CD8-positive, alpha-beta memory T cell (primary cell): ENCODE measurements at regions of chr19 and their contacts with region 1.

Region 1: GRCh38 chr19:54390942-54391577 is 24.2 kb upstream of the TTYH1 start:
- DNase-seq: peak; percentile 58 to 79 (median 68)
- H3K4me3 ChIP-seq: no peak overlapping the region
- H3K4me3 Mint-ChIP-seq: peak overlapping the region in 4 of 7 donors; percentile 39 to 69 (median 66)
- H3K27ac ChIP-seq: no peak overlapping the region
- H3K27ac Mint-ChIP-seq: peak overlapping the region in 6 of 8 donors; percentile 41 to 97 (median 81)
- H3K4me1 ChIP-seq: peaks cover 34% of the 10 kb centered on the region
- H3K4me1 Mint-ChIP-seq: peaks cover 32 to 40% (median 37%) of the 10 kb centered on the region in 3 donors
- H3K27me3 ChIP-seq: no peaks in the 10 kb centered on the region
- H3K27me3 Mint-ChIP-seq: peaks cover 7 to 19% of the 10 kb centered on the region in 2 donors

Region 2: GRCh38 chr19:54287456-54287855 is 103.6 kb before region 1 on chr19:
- CTCF ChIA-PET with region 1: no interaction called
- POLR2A ChIA-PET with region 1: no interaction called
- DNase-seq: no peak
- H3K4me3 ChIP-seq: no peak overlapping the region
- H3K4me3 Mint-ChIP-seq: no peak overlapping the region
- H3K27ac ChIP-seq: no peak overlapping the region
- H3K27ac Mint-ChIP-seq: no peak overlapping the region
- H3K4me1 ChIP-seq: no peaks in the 10 kb centered on the region
- H3K4me1 Mint-ChIP-seq: peaks cover 0 to 17% (median 10%) of the 10 kb centered on the region in 3 donors
- H3K27me3 ChIP-seq: no peaks in the 10 kb centered on the region
- H3K27me3 Mint-ChIP-seq: peaks cover 5 to 49% of the 10 kb centered on the region in 2 donors

Region 3: DNA sequence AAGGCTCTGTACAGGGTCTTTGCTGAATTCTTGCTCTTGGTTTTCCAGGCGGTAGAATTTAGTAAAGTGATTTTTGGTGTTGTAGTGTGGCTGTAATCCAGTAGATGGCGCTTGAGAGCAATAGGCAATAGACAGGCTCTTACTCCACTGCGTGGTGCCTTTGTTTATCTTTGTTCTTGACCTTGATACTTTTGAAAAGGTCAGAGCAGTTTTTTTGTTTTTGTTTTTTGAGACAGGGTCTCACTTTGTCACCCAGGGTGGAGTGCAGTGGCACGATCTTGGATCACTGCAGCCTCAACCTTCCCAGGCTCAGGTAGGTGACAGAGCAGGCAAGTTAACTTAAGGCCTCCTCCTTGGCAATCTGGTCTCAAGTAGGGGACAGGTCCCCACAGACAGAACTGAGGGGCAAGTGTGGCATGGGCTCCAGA is 65.9 kb before region 1 on chr19:
- CTCF ChIA-PET with region 1: interaction called, 119 read pairs
- POLR2A ChIA-PET with region 1: interaction called, 5 read pairs
- DNase-seq: peak; percentile 44 to 60 (median 50)
- H3K4me3 ChIP-seq: no peak overlapping the region
- H3K4me3 Mint-ChIP-seq: no peak overlapping the region
- H3K27ac ChIP-seq: no peak overlapping the region
- H3K27ac Mint-ChIP-seq: no peak overlapping the region
- H3K4me1 ChIP-seq: peaks cover 8% of the 10 kb centered on the region
- H3K4me1 Mint-ChIP-seq: peaks cover 8 to 15% (median 10%) of the 10 kb centered on the region in 3 donors
- H3K27me3 ChIP-seq: no peaks in the 10 kb centered on the region
- H3K27me3 Mint-ChIP-seq: peaks cover 9 to 23% of the 10 kb centered on the region in 2 donors

Region 4: GRCh38 chr19:54352546-54352945 is 38.5 kb before region 1 on chr19:
- CTCF ChIA-PET with region 1: interaction called, 44 read pairs
- POLR2A ChIA-PET with region 1: interaction called, 3 read pairs
- DNase-seq: no peak
- H3K4me3 ChIP-seq: no peak overlapping the region
- H3K4me3 Mint-ChIP-seq: no peak overlapping the region
- H3K27ac ChIP-seq: no peak overlapping the region
- H3K27ac Mint-ChIP-seq: peak overlapping the region in 5 of 8 donors; percentile 2 to 62 (median 34)
- H3K4me1 ChIP-seq: no peaks in the 10 kb centered on the region
- H3K4me1 Mint-ChIP-seq: peaks cover 3 to 9% (median 9%) of the 10 kb centered on the region in 3 donors
- H3K27me3 ChIP-seq: no peaks in the 10 kb centered on the region
- H3K27me3 Mint-ChIP-seq: peaks cover 2 to 3% of the 10 kb centered on the region in 2 donors

Region 5: GRCh38 chr19:54364775-54365257 is 26.2 kb before region 1 on chr19 and contains the start of gene LAIR1:
- CTCF ChIA-PET with region 1: interaction called, 14 read pairs
- POLR2A ChIA-PET with region 1: no interaction called
- DNase-seq: peak; percentile 11 to 64 (median 48)
- H3K4me3 ChIP-seq: peak within 1 kb of the TSS; percentile 75
- H3K4me3 Mint-ChIP-seq: peak within 1 kb of the TSS; percentile 83 to 95 (median 89)
- H3K27ac ChIP-seq: no peak within 1 kb of the TSS
- H3K27ac Mint-ChIP-seq: peak within 1 kb of the TSS; percentile 78 to 98 (median 94)
- H3K4me1 ChIP-seq: peaks cover 64% of the 10 kb centered on the region
- H3K4me1 Mint-ChIP-seq: peaks cover 71 to 87% (median 83%) of the 10 kb centered on the region in 3 donors
- H3K27me3 ChIP-seq: no peaks in the 10 kb centered on the region
- H3K27me3 Mint-ChIP-seq: no peaks in the 10 kb centered on the region
- total RNA-seq, gene LAIR1: 12.9 to 13.1 TPM

Region 6: GRCh38 chr19:54373781-54374631 is 17.1 kb before region 1 on chr19:
- CTCF ChIA-PET with region 1: interaction called, 13 read pairs
- POLR2A ChIA-PET with region 1: interaction called, 19 read pairs
- DNase-seq: no peak
- H3K4me3 ChIP-seq: no peak overlapping the region
- H3K4me3 Mint-ChIP-seq: peak overlapping the region in 5 of 7 donors; percentile 17 to 81 (median 19)
- H3K27ac ChIP-seq: no peak overlapping the region
- H3K27ac Mint-ChIP-seq: peak overlapping the region in 1 of 8 donors; percentile 12
- H3K4me1 ChIP-seq: peaks cover 75% of the 10 kb centered on the region
- H3K4me1 Mint-ChIP-seq: peaks cover 73 to 81% (median 81%) of the 10 kb centered on the region in 3 donors
- H3K27me3 ChIP-seq: no peaks in the 10 kb centered on the region
- H3K27me3 Mint-ChIP-seq: no peaks in the 10 kb centered on the region

Region 7: GRCh38 chr19:54379187-54379678 is 11.8 kb before region 1 on chr19:
- CTCF ChIA-PET with region 1: interaction called, 13 read pairs
- POLR2A ChIA-PET with region 1: interaction called, 19 read pairs
- DNase-seq: no peak
- H3K4me3 ChIP-seq: no peak overlapping the region
- H3K4me3 Mint-ChIP-seq: peak overlapping the region in 2 of 7 donors; percentile 32 to 43
- H3K27ac ChIP-seq: no peak overlapping the region
- H3K27ac Mint-ChIP-seq: peak overlapping the region in 4 of 8 donors; percentile 54 to 77 (median 69)
- H3K4me1 ChIP-seq: peaks cover 47% of the 10 kb centered on the region
- H3K4me1 Mint-ChIP-seq: peaks cover 51 to 57% (median 53%) of the 10 kb centered on the region in 3 donors
- H3K27me3 ChIP-seq: no peaks in the 10 kb centered on the region
- H3K27me3 Mint-ChIP-seq: no peaks in the 10 kb centered on the region

Region 8: DNA sequence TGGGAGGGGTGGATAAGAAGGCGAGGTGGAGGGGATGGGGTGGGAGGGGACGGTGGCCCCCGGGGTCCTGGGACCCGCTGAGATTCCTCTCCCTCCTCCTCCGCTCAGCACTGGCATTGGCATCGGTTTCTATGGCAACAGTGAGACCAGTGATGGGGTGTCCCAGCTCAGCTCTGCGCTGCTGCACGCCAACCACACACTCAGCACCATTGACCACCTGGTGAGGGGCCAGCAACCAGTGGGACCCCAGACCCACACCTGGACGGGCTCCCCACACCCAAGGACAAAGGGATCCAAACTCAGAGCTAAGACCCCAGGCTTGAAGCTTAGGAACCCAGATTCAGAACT is 30.1 kb after region 1 on chr19:
- CTCF ChIA-PET with region 1: no interaction called
- POLR2A ChIA-PET with region 1: no interaction called
- DNase-seq: no peak
- H3K4me3 ChIP-seq: no peak overlapping the region
- H3K4me3 Mint-ChIP-seq: no peak overlapping the region
- H3K27ac ChIP-seq: no peak overlapping the region
- H3K27ac Mint-ChIP-seq: peak overlapping the region in 1 of 8 donors; percentile 87
- H3K4me1 ChIP-seq: peaks cover 12% of the 10 kb centered on the region
- H3K4me1 Mint-ChIP-seq: peaks cover 15 to 17% (median 16%) of the 10 kb centered on the region in 3 donors
- H3K27me3 ChIP-seq: peaks cover 15% of the 10 kb centered on the region
- H3K27me3 Mint-ChIP-seq: peaks cover 35 to 47% of the 10 kb centered on the region in 2 donors

Region 9: DNA sequence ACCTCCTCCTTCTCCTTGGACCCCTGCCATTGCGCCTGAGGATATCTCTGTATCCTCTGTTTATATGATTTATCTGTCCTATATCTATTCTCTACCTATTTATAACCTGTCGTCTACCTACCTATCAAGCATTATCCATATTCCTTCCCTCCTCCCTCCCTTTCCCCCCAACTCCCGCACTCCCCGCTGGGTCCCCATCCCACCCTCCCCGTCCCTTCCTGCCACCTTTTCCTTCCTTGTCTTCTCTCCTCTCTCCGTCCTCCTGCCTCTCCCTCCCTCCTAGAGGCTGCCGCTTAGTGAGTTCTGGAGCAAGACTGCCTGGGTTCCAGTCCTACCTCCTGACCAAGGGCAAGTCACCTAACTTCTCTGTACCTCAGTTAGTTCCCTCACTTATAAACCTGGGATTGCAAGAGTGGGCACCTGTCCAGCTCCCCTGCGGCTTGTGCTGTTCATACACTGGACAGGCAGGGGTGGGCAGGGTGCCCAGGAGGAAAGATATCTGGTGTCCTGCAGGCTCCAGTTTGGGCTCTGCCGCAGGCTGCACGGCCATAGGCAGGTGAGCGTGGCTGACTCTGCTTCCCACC is 40.3 kb after region 1 on chr19:
- CTCF ChIA-PET with region 1: no interaction called
- POLR2A ChIA-PET with region 1: no interaction called
- DNase-seq: no peak
- H3K4me3 ChIP-seq: no peak overlapping the region
- H3K4me3 Mint-ChIP-seq: peak overlapping the region in 6 of 7 donors; percentile 15 to 84 (median 42)
- H3K27ac ChIP-seq: no peak overlapping the region
- H3K27ac Mint-ChIP-seq: peak overlapping the region in 2 of 8 donors; percentile 20 to 84
- H3K4me1 ChIP-seq: peaks cover 11% of the 10 kb centered on the region
- H3K4me1 Mint-ChIP-seq: peaks cover 10 to 32% (median 16%) of the 10 kb centered on the region in 3 donors
- H3K27me3 ChIP-seq: no peaks in the 10 kb centered on the region
- H3K27me3 Mint-ChIP-seq: peaks cover 13 to 15% of the 10 kb centered on the region in 2 donors

Region 10: GRCh38 chr19:54517483-54517882 is 126.4 kb after region 1 on chr19:
- CTCF ChIA-PET with region 1: no interaction called
- POLR2A ChIA-PET with region 1: no interaction called
- DNase-seq: peak; percentile 14 to 59 (median 30)
- H3K4me3 ChIP-seq: no peak overlapping the region
- H3K4me3 Mint-ChIP-seq: no peak overlapping the region
- H3K27ac ChIP-seq: no peak overlapping the region
- H3K27ac Mint-ChIP-seq: no peak overlapping the region
- H3K4me1 ChIP-seq: peaks cover 17% of the 10 kb centered on the region
- H3K4me1 Mint-ChIP-seq: peaks cover 16 to 30% (median 26%) of the 10 kb centered on the region in 3 donors
- H3K27me3 ChIP-seq: no peaks in the 10 kb centered on the region
- H3K27me3 Mint-ChIP-seq: peaks cover 21 to 59% of the 10 kb centered on the region in 2 donors